ENCODE measurements at regions of chr9 and their contacts with region 1.

Region 1: GRCh38 chr9:28014212-28014611 is 440.9 kb upstream of the C9orf72 start:
- DNase-seq: no peak
- ATAC-seq: no peak
- H3K4me3 ChIP-seq: no peak overlapping the region
- H3K4me3 Mint-ChIP-seq: no peak overlapping the region
- H3K27ac ChIP-seq: no peak overlapping the region
- H3K27ac Mint-ChIP-seq: no peak overlapping the region
- H3K4me1 ChIP-seq: no peaks in the 10 kb centered on the region
- H3K4me1 Mint-ChIP-seq: no peaks in the 10 kb centered on the region
- H3K27me3 ChIP-seq: no peaks in the 10 kb centered on the region
- H3K27me3 Mint-ChIP-seq: no peaks in the 10 kb centered on the region
- CTCF ChIP-seq: no peak

Region 2: GRCh38 chr9:27117489-27118135 is 896.6 kb before region 1 on chr9:
- CTCF ChIA-PET with region 1: no interaction called
- POLR2A ChIA-PET with region 1: no interaction called
- intact Hi-C with region 1: no loop called
- DNase-seq: no peak
- ATAC-seq: no peak
- H3K4me3 ChIP-seq: no peak overlapping the region
- H3K4me3 Mint-ChIP-seq: no peak overlapping the region
- H3K27ac ChIP-seq: no peak overlapping the region
- H3K27ac Mint-ChIP-seq: no peak overlapping the region
- H3K4me1 ChIP-seq: no peaks in the 10 kb centered on the region
- H3K4me1 Mint-ChIP-seq: no peaks in the 10 kb centered on the region
- H3K27me3 ChIP-seq: no peaks in the 10 kb centered on the region
- H3K27me3 Mint-ChIP-seq: peaks cover 8% of the 10 kb centered on the region
- CTCF ChIP-seq: no peak

Region 3: GRCh38 chr9:28001096-28001495 is 13.1 kb before region 1 on chr9:
- CTCF ChIA-PET with region 1: no interaction called
- POLR2A ChIA-PET with region 1: no interaction called
- intact Hi-C with region 1: no loop called
- DNase-seq: no peak
- ATAC-seq: no peak
- H3K4me3 ChIP-seq: no peak overlapping the region
- H3K4me3 Mint-ChIP-seq: no peak overlapping the region
- H3K27ac ChIP-seq: no peak overlapping the region
- H3K27ac Mint-ChIP-seq: no peak overlapping the region
- H3K4me1 ChIP-seq: no peaks in the 10 kb centered on the region
- H3K4me1 Mint-ChIP-seq: no peaks in the 10 kb centered on the region
- H3K27me3 ChIP-seq: no peaks in the 10 kb centered on the region
- H3K27me3 Mint-ChIP-seq: no peaks in the 10 kb centered on the region
- CTCF ChIP-seq: no peak

Region 4: GRCh38 chr9:28064241-28064815 is 50.1 kb after region 1 on chr9:
- CTCF ChIA-PET with region 1: no interaction called
- POLR2A ChIA-PET with region 1: no interaction called
- intact Hi-C with region 1: loop called in 1 of 2 experiments (anchors 1 kb)
- DNase-seq: no peak
- ATAC-seq: no peak
- H3K4me3 ChIP-seq: no peak overlapping the region
- H3K4me3 Mint-ChIP-seq: no peak overlapping the region
- H3K27ac ChIP-seq: no peak overlapping the region
- H3K27ac Mint-ChIP-seq: no peak overlapping the region
- H3K4me1 ChIP-seq: no peaks in the 10 kb centered on the region
- H3K4me1 Mint-ChIP-seq: no peaks in the 10 kb centered on the region
- H3K27me3 ChIP-seq: no peaks in the 10 kb centered on the region
- H3K27me3 Mint-ChIP-seq: no peaks in the 10 kb centered on the region
- CTCF ChIP-seq: no peak

Measured in CD8-positive, alpha-beta T cell (primary cell).